Panc1 (cell line): ENCODE measurements at regions of chr1 and their contacts with region 1.

Region 1: DNA sequence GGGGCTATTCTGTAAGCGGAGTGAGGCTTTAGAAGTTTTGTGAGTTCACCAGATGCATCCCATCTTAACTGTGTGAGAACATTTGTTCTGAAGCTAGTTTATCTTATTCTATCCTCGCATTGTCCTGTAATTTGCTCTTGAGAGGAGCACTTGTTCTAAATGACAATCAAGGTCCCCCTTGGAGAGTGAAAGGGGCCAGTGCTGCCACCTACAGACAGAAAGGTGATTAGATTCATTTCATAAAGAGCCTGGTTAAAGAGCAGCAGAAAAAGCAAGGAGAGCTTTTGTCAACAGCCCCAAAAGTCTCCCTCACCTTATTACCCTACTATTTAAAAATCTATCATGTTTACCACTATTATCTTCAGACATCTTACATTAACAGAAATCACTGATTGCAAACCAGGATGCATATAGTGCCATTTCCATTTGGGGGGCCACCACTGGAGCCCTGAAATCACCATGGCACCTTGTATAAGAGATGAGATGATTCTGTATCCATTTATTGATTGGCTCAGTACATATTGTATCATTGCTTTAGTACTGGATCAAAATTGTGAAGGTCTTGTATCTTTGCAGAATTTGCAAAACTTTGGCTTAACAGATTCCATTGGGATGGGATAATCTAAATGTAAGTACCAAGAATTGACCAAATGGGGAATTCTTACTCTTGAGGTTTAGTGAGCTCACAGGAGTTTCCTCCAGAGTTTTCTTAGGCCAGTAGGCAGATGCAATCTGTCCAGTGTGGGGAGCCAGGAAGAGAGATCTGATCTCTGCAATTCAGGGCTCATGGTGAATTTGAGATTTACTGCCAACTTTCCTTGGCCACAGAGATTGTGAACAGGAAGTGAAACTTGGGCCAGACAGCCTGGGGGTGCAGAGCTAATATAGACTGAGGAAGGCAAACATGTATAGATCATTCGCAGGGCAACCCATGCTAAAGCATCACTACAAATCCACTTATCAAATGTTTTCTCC is 64.3 kb upstream of the TRABD2B start:
- DNase-seq: peak; percentile 17
- ATAC-seq: peak; percentile 69; the same call in 1 of the 2 replicates
- H3K4me3 ChIP-seq: no peak overlapping the region
- H3K27ac ChIP-seq: no peak overlapping the region
- H3K4me1 ChIP-seq: no peaks in the 10 kb centered on the region
- H3K27me3 ChIP-seq: no peaks in the 10 kb centered on the region; the same call in 1 of the 2 replicates
- CTCF ChIP-seq: peak; percentile 74

Region 2: GRCh38 chr1:47934243-47934805 is 127.1 kb before region 1 on chr1:
- CTCF ChIA-PET with region 1: no interaction called
- POLR2A ChIA-PET with region 1: no interaction called
- in situ Hi-C with region 1: no loop called
- intact Hi-C with region 1: loop called (anchors 10 kb)
- DNase-seq: no peak
- ATAC-seq: no peak
- H3K4me3 ChIP-seq: no peak overlapping the region
- H3K27ac ChIP-seq: no peak overlapping the region
- H3K4me1 ChIP-seq: no peaks in the 10 kb centered on the region
- H3K27me3 ChIP-seq: no peaks in the 10 kb centered on the region; the same call in 1 of the 2 replicates
- CTCF ChIP-seq: no peak